Activated naive CD4-positive, alpha-beta T cell treated with anti-CD3 and anti-CD28 coated beads, Interleukin-2, amount 10 ng/mL, durations not matched to agents 7 days and 5 days (primary cell): ENCODE measurements at regions of chr17 and their contacts with region 1.

Region 1: DNA sequence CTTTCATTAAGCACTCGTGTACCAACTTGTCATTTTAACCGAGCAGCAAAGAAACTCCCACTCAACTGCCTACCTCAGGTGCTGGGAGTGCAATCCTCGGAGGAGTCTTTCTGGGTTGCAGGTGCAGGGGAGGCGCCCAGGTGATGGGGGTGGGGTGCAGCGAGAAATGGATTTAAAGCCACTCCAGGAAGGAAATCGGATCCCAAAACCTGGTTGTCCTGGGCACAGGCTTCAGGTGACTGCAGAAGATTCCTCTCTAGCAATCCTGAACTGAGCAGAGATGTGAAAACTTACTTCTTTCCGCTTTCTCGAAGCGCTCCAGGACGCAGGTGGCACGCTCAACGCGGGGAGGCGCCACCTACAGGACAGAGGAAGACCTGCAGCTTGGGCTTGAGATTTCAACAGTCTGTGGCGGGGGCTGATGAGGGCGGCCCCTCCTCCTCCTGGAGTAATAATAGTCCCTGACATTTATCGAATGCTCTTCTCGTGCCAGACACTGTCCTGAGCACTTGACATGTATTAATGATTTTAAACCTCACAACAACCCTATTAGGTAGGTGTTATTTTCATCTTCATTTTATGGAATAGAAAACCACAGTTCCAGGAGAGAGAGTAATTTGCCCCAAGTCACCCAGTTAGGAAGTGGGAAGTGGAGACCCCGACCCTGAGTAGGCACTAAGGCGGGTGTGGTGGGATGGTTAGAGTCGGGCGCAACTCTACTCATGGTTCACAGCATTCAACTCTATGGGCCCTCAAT is 27.2 kb upstream of the SKAP1 start:
- DNase-seq: peak; percentile 80
- H3K4me3 Mint-ChIP-seq: peak overlapping the region; percentile 61
- H3K27ac Mint-ChIP-seq: peak overlapping the region; percentile 61
- H3K4me1 Mint-ChIP-seq: peaks cover 61% of the 10 kb centered on the region
- H3K27me3 Mint-ChIP-seq: peaks cover 5% of the 10 kb centered on the region

Region 2: GRCh38 chr17:48351831-48352332 is 105.4 kb before region 1 on chr17:
- CTCF ChIA-PET with region 1: interaction called, 33 read pairs
- DNase-seq: no peak
- H3K4me3 Mint-ChIP-seq: no peak overlapping the region
- H3K27ac Mint-ChIP-seq: no peak overlapping the region
- H3K4me1 Mint-ChIP-seq: peaks cover 6% of the 10 kb centered on the region
- H3K27me3 Mint-ChIP-seq: no peaks in the 10 kb centered on the region

Region 3: GRCh38 chr17:48374650-48375230 is 82.5 kb before region 1 on chr17:
- CTCF ChIA-PET with region 1: interaction called, 10 read pairs
- DNase-seq: peak; percentile 44
- H3K4me3 Mint-ChIP-seq: no peak overlapping the region
- H3K27ac Mint-ChIP-seq: no peak overlapping the region
- H3K4me1 Mint-ChIP-seq: peaks cover 7% of the 10 kb centered on the region
- H3K27me3 Mint-ChIP-seq: no peaks in the 10 kb centered on the region

Region 4: GRCh38 chr17:48441231-48441711 is 16.0 kb before region 1 on chr17:
- CTCF ChIA-PET with region 1: interaction called, 24 read pairs
- DNase-seq: peak; percentile 58
- H3K4me3 Mint-ChIP-seq: peak overlapping the region; percentile 53
- H3K27ac Mint-ChIP-seq: peak overlapping the region; percentile 96
- H3K4me1 Mint-ChIP-seq: peaks cover 94% of the 10 kb centered on the region
- H3K27me3 Mint-ChIP-seq: no peaks in the 10 kb centered on the region